SK-N-SH (cell line): ENCODE measurements at regions of chr1 and their contacts with region 1.

Region 1: GRCh38 chr1:15272009-15272788 is 25.2 kb downstream of the FHAD1 start:
- DNase-seq: peak; percentile 85
- H3K4me3 ChIP-seq: no peak overlapping the region
- H3K27ac ChIP-seq: no peak overlapping the region
- H3K4me1 ChIP-seq: peaks cover 0 to 5% of the 10 kb centered on the region in 2 experiments; a peak in 1 of 4 replicates
- H3K27me3 ChIP-seq: no peaks in the 10 kb centered on the region
- CTCF ChIP-seq: peak; percentile 82
- EP300 ChIP-seq: no peak
- RAD21 ChIP-seq: peak; percentile 96

Region 2: GRCh38 chr1:15128520-15129313 is 143.5 kb before region 1 on chr1:
- CTCF ChIA-PET with region 1: interaction called, 119 read pairs
- POLR2A ChIA-PET with region 1: interaction called, 4 read pairs
- DNase-seq: peak; percentile 88
- H3K4me3 ChIP-seq: peak overlapping the region in 1 of 2 experiments; percentile 43; a peak in 1 of 4 replicates
- H3K27ac ChIP-seq: peak overlapping the region in 1 of 2 experiments; percentile 71; a peak in 2 of 4 replicates
- H3K4me1 ChIP-seq: peaks cover 0 to 7% of the 10 kb centered on the region in 2 experiments; a peak in 1 of 4 replicates
- H3K27me3 ChIP-seq: no peaks in the 10 kb centered on the region
- CTCF ChIP-seq: peak; percentile 90
- EP300 ChIP-seq: peak in 1 of 2 experiments; percentile 38; a peak in 1 of 4 replicates
- RAD21 ChIP-seq: peak; percentile 96

Region 3: GRCh38 chr1:15141935-15142539 is 130.2 kb before region 1 on chr1:
- CTCF ChIA-PET with region 1: interaction called, 14 read pairs
- POLR2A ChIA-PET with region 1: no interaction called
- DNase-seq: no peak
- H3K4me3 ChIP-seq: no peak overlapping the region
- H3K27ac ChIP-seq: peak overlapping the region in 1 of 2 experiments; percentile 97; a peak in 2 of 4 replicates
- H3K4me1 ChIP-seq: peaks cover 3 to 45% of the 10 kb centered on the region in 2 experiments; a peak in 3 of 4 replicates
- H3K27me3 ChIP-seq: no peaks in the 10 kb centered on the region
- CTCF ChIP-seq: peak; percentile 22; the same call in 1 of the 2 replicates
- EP300 ChIP-seq: peak; percentile 37 to 87; a peak in 3 of 4 replicates
- RAD21 ChIP-seq: no peak

Region 4: GRCh38 chr1:15197591-15198447 is 74.4 kb before region 1 on chr1:
- CTCF ChIA-PET with region 1: interaction called, 21 read pairs
- POLR2A ChIA-PET with region 1: interaction called, 3 read pairs
- DNase-seq: no peak
- H3K4me3 ChIP-seq: no peak overlapping the region
- H3K27ac ChIP-seq: no peak overlapping the region; a peak in 1 of 4 replicates
- H3K4me1 ChIP-seq: peaks cover 14 to 57% of the 10 kb centered on the region in 2 experiments
- H3K27me3 ChIP-seq: no peaks in the 10 kb centered on the region
- CTCF ChIP-seq: no peak
- EP300 ChIP-seq: no peak
- RAD21 ChIP-seq: no peak

Region 5: GRCh38 chr1:15246960-15247614 is 25.1 kb before region 1 on chr1 and contains the start of gene FHAD1:
- CTCF ChIA-PET with region 1: interaction called, 18 read pairs
- POLR2A ChIA-PET with region 1: no interaction called
- DNase-seq: peak; percentile 96
- H3K4me3 ChIP-seq: peak within 1 kb of the TSS; percentile 56 to 61
- H3K27ac ChIP-seq: peak within 1 kb of the TSS in 1 of 2 experiments; percentile 43; a peak in 1 of 4 replicates
- H3K4me1 ChIP-seq: peaks cover 0 to 18% of the 10 kb centered on the region in 2 experiments; a peak in 1 of 4 replicates
- H3K27me3 ChIP-seq: no peaks in the 10 kb centered on the region
- CTCF ChIP-seq: no peak
- EP300 ChIP-seq: no peak
- RAD21 ChIP-seq: no peak
- polyA plus RNA-seq, gene FHAD1: 0.48 and 0.55 TPM in 2 replicates

Region 6: DNA sequence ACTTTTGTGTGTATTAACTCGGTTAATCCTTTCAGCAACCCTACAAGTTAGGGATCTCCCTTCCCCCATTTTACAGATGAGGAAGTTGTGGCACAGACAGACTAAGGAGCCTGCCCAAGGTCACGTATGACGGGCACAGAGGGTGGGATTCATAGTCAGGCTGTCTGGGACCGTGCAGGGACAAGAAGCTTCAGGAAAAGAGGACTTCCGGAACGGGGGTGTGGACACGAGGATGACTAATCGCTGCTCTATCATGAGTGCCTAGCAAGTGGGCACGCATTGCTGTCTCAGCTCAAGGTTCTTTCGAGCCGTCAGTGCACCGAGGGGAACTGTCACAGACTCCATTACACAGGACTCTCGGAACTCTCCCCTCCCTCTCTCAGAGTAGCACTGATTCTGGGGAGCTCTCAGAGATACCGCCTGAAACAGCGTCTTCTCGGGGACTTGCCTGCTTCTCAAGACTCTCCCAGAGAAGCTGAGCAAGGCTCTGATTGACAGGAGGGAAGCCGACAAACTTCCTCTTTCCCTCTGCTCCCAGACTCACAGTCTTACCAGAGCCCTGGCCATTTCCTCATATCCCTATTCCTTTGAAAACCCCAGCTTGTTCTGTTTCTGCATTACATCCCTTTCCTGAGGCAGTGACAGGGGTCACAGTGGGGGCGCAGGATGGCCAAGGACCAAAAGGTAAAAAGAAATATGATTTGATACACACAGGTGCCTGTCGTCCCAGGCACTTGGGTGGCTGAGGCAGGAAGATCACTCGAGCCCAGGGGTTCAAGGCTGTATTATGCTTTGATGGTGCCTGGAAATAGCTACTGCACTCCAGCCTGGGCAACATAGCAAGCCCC is 10.8 kb before region 1 on chr1:
- CTCF ChIA-PET with region 1: interaction called, 21 read pairs
- POLR2A ChIA-PET with region 1: no interaction called
- DNase-seq: no peak
- H3K4me3 ChIP-seq: no peak overlapping the region
- H3K27ac ChIP-seq: no peak overlapping the region
- H3K4me1 ChIP-seq: no peaks in the 10 kb centered on the region; a peak in 1 of 4 replicates
- H3K27me3 ChIP-seq: no peaks in the 10 kb centered on the region
- CTCF ChIP-seq: no peak
- EP300 ChIP-seq: no peak
- RAD21 ChIP-seq: no peak

Region 7: GRCh38 chr1:15283526-15283925 is 11.3 kb after region 1 on chr1:
- CTCF ChIA-PET with region 1: interaction called, 37 read pairs
- POLR2A ChIA-PET with region 1: no interaction called
- DNase-seq: peak; percentile 75
- H3K4me3 ChIP-seq: no peak overlapping the region
- H3K27ac ChIP-seq: peak overlapping the region in 1 of 2 experiments; percentile 55; a peak in 1 of 4 replicates
- H3K4me1 ChIP-seq: peaks cover 0 to 14% of the 10 kb centered on the region in 2 experiments; a peak in 1 of 4 replicates
- H3K27me3 ChIP-seq: no peaks in the 10 kb centered on the region
- CTCF ChIP-seq: peak; percentile 38
- EP300 ChIP-seq: no peak
- RAD21 ChIP-seq: 0 out of 2 replicates have a peak, but pooled peaks have one; percentile 14

Region 8: GRCh38 chr1:15352123-15352957 is 80.1 kb after region 1 on chr1:
- CTCF ChIA-PET with region 1: no interaction called
- POLR2A ChIA-PET with region 1: no interaction called
- DNase-seq: no peak
- H3K4me3 ChIP-seq: no peak overlapping the region
- H3K27ac ChIP-seq: peak overlapping the region in 1 of 2 experiments; percentile 75; a peak in 2 of 4 replicates
- H3K4me1 ChIP-seq: peaks cover 4 to 32% of the 10 kb centered on the region in 2 experiments; a peak in 3 of 4 replicates
- H3K27me3 ChIP-seq: no peaks in the 10 kb centered on the region
- CTCF ChIP-seq: no peak
- EP300 ChIP-seq: peak in 1 of 2 experiments; percentile 79; a peak in 1 of 4 replicates
- RAD21 ChIP-seq: no peak

Region 9: DNA sequence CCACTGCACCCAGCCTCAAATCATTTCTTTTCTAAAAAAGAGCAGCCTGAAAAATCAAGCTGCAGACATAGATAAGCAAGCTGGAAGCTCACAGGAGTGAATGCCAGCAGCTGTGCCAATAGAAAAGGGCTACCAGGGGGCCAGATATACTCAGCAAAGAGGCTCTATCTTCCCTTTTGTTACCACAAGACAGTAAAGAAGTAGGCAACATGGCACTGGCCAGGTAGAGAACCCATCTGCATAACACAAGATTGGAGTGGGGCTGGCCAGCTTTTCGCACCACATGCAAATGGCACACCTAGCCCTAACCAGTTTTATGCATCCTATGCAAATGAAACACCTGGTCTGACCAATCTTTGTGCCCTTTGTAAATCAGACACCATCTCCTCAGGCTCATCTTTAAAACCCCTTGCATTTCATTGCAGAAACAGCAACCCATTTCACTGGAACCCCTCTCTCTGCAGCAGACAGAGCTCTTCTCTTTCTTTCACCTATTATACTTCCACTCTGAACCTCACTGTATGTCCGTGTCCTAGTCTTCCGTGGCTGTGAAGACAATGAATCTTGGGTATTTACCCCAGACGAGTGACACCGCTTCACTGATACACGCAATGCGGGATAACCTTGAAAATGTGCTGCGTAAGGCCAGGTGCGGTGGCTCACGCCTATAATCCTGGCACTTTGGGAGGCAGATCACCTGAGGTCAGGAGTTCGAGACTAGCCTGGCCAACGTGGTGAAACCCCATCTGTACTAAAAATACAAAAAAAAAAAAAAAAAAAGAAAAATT is 236.7 kb after region 1 on chr1:
- CTCF ChIA-PET with region 1: no interaction called
- POLR2A ChIA-PET with region 1: no interaction called
- DNase-seq: no peak
- H3K4me3 ChIP-seq: no peak overlapping the region
- H3K27ac ChIP-seq: no peak overlapping the region
- H3K4me1 ChIP-seq: no peaks in the 10 kb centered on the region
- H3K27me3 ChIP-seq: no peaks in the 10 kb centered on the region
- CTCF ChIP-seq: no peak
- EP300 ChIP-seq: no peak
- RAD21 ChIP-seq: no peak